Activated naive CD8-positive, alpha-beta T cell treated with anti-CD3 and anti-CD28 coated beads, Interleukin-2, amount 10 ng/mL, durations not matched to agents 7 days and 5 days (primary cell): ENCODE measurements at regions of chr1 and their contacts with region 1.

Region 1: DNA sequence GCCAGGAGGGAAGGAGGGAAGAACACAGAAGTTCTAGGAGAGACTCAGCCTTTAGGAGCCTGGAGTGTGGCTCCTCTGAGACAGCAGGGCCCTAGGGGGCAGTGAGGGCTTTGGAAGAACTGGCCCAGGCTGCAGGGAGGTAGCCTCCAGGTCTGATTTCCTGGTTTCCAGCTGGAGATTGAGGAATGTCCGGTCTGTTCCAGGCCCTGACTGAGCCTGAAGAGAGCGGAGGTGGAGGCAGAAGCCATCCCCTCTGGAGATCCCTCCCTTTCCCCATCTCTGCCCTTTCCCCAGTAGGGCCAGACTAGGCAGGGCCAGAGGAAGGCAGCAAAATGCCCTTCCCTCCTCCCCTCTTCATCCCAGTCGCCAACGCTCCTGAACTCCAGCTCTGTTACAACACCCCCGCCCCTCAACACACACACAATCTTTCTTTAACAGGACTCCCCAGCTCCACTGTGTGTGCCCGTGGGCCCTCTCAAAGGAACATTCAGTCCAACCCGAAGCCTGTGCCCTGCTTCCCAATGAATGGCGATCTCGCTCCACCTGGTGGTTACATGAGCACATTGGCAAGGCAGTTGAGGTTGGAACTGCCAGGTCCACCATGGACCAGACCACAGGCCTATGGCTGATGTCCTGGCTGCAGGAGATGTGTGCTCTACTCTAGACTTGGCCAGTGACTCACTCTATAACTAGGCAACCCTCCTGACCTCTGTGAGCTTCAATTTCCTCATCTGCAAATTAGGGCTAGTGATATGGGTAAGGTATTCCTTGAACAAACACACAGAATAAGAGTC is 32.0 kb downstream of the MAP7D1 start:
- DNase-seq: peak; percentile 74
- ATAC-seq: peak; percentile 96
- H3K4me3 Mint-ChIP-seq: no peak overlapping the region
- H3K27ac Mint-ChIP-seq: peak overlapping the region; percentile 89
- H3K4me1 Mint-ChIP-seq: peaks cover 10% of the 10 kb centered on the region
- H3K27me3 Mint-ChIP-seq: no peaks in the 10 kb centered on the region

Region 2: DNA sequence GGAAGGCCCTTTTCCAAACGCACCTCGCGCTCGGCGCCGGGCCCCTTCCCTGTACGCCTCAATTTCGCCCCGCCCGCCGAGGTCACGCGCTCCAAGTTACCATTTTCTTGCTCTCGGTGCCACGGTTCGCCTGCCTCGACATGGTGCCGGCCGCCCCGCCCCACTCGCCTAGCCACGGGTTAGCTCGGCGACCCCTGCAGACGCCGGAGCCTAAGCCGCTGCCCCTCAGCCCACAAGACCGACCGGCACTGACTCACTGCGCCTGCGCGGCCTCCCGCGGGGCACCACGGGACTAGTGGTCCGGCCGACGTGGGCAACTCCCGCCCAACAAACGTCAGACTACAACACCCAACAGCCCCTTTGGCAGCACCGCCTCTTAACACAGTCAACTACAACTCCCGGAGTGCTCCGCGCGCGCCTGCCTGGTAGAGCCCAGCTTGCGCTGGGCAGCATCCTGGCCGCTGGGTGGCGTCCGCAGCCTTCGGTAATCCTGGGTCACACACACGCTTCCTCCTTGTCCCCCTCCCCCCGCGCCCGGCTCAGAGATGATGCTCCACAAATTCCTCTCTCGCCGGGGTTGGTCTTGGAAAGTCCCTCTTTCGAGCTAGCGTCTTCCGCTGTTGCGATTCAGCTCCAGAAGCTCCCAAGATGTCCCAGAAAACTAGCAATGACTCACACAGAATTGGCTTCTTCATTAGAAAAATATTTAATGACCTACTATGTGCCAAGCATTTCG is 38.6 kb before region 1 on chr1 and contains the start of gene TRAPPC3:
- POLR2A ChIA-PET with region 1: interaction called, 35 read pairs
- DNase-seq: peak; percentile 98
- ATAC-seq: peak; percentile 93
- H3K4me3 Mint-ChIP-seq: peak within 1 kb of the TSS; percentile 98
- H3K27ac Mint-ChIP-seq: peak within 1 kb of the TSS; percentile 100
- H3K4me1 Mint-ChIP-seq: peaks cover 46% of the 10 kb centered on the region
- H3K27me3 Mint-ChIP-seq: no peaks in the 10 kb centered on the region
- total RNA-seq, gene TRAPPC3: 51.7 to 52.5 TPM

Region 3: DNA sequence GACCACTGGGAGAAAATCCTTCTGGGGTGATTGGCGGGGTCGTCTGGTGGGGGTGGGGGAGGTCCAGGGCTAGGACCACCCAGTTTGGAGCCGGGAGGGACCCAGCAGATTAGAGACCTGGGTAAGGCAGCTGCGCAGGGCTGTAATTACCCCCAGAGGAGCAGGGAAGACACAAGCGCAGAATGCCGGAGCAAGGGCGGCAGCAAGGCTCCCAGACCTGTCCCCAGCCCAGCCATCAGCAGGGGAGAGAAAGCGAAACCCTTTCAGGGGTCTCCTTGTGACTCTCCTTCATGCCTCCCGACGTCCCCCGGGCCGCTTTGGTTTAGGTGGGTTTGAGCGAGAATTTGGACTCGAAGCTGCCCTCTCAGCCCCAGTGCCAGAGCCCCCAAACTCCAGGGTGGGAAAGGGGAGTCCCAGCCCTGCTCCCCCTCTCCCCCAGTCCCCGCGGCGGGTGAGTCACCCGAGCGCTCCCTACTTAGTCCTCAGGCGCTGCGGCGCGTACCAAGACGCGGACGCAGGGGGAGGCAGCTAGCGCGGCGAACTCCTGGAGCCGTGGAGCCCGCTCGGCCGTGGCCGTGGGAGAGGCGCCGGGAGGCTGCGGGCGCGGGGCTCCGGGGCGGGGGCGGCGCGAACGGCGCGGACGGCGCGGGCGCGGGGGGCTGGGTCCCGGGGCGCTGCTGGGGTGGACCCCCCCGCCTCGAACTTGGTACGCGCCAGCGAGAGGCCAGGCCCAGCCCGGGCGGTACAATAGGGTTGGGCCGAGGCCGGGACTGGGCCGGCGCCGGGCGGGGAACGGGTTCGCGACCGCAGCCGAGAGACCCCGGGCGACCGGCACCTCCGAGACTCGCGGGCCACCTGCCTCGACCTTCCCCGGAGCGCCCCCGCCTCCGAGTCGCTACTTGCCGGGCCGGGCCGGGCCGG is 32.3 kb before region 1 on chr1 and contains the start of gene MAP7D1:
- POLR2A ChIA-PET with region 1: interaction called, 35 read pairs
- DNase-seq: peak; percentile 92
- ATAC-seq: peak; percentile 67
- H3K4me3 Mint-ChIP-seq: peak within 1 kb of the TSS; percentile 88
- H3K27ac Mint-ChIP-seq: peak within 1 kb of the TSS; percentile 92
- H3K4me1 Mint-ChIP-seq: peaks cover 58% of the 10 kb centered on the region
- H3K27me3 Mint-ChIP-seq: no peaks in the 10 kb centered on the region
- total RNA-seq, gene MAP7D1: 234 to 237 TPM

Region 4: GRCh38 chr1:36160949-36161485 is 27.0 kb before region 1 on chr1:
- POLR2A ChIA-PET with region 1: interaction called, 25 read pairs
- DNase-seq: peak; percentile 77
- ATAC-seq: peak; percentile 43
- H3K4me3 Mint-ChIP-seq: peak overlapping the region; percentile 91
- H3K27ac Mint-ChIP-seq: peak overlapping the region; percentile 97
- H3K4me1 Mint-ChIP-seq: peaks cover 65% of the 10 kb centered on the region
- H3K27me3 Mint-ChIP-seq: no peaks in the 10 kb centered on the region

Region 5: DNA sequence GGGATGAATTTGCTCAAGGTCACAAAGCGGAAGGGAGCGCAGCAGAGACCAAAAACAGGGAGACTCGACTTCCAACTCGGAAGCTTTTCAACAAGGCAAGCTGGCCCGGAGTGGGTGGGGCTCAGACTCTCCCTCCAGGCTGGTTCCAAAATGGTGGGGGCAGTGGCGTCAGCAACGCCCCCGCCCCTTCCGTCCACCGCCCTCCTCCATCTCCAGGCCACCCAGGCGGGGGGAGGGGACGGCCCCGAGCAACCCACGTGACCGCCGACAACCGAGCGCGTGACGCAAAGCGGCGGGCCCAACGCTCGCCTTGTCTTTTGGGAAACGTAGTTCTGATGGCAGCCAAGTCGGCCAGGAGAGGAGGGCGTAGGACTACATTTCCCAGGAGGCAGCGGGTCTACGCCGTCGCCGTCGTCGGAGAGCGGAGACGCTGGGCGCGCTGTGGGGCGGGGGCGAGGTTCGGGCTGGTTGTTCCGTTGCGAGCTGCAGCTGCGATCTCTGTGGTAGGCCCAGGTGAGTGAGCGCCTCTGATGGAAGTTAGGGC is 36.1 kb after region 1 on chr1 and contains the start of gene THRAP3:
- POLR2A ChIA-PET with region 1: interaction called, 10 read pairs
- DNase-seq: peak; percentile 99
- ATAC-seq: peak; percentile 89
- H3K4me3 Mint-ChIP-seq: peak within 1 kb of the TSS; percentile 97
- H3K27ac Mint-ChIP-seq: peak within 1 kb of the TSS; percentile 100
- H3K4me1 Mint-ChIP-seq: peaks cover 26% of the 10 kb centered on the region
- H3K27me3 Mint-ChIP-seq: no peaks in the 10 kb centered on the region
- total RNA-seq, gene THRAP3: 125 to 130 TPM